Activated CD8-positive, alpha-beta T cell treated with anti-CD3 and anti-CD28 coated beads, Interleukin-2, amount 10 ng/mL, durations not matched to agents 7 days and 5 days (primary cell): ENCODE measurements at regions of chr11 and their contacts with region 1.

Region 1: GRCh38 chr11:67572747-67573419 is 10.7 kb upstream of the GSTP1 start:
- DNase-seq: peak; percentile 51
- ATAC-seq: no peak
- H3K4me3 Mint-ChIP-seq: no peak overlapping the region
- H3K27ac Mint-ChIP-seq: no peak overlapping the region
- H3K4me1 Mint-ChIP-seq: no peaks in the 10 kb centered on the region
- H3K27me3 Mint-ChIP-seq: peaks cover 14% of the 10 kb centered on the region

Region 2: DNA sequence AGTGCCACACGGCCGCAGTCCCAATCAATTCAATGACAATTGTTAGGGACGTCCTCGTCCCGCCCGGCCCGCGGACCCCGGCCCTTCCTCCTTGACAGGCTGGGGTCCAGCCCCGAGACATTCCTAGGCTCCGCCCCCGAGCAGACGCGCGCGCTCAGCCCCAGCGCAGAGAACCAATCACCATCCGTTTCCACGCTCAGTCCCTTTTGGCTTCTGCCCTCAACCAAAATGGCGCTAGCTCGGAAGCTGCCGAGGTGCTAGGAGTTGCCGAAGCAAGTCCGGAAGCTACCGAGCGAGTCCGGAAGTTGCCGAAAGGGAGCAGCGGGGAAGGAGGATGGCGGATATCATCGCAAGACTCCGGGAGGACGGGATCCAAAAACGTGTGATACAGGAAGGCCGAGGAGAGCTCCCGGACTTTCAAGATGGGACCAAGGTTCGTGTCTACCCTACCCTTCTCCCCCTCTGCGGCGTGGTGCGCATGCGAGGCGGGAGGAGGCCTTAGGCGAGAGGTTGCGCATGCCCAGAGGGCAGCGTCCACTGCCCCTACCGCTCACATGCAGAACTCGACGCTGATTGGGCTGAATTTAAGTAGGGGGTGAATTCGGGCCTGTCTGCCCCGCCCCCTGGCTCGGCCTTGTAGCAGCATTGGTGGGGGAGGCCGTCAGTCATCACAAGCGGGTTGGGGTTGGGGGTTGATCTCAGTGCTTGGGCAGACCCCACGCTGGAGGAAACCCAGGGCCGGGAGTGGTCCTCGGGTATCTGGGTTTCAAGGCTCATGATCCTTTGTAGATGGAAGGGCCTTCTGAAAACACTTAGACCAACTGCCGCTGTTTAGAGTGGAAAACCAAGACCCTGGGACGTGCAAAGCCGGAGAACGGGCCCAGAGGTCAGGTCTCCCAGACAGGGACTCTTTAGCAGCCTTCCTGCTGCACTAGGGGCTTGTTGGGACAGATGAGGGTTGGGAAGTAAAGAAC is 89.8 kb before region 1 on chr11 and contains the start of gene AIP:
- CTCF ChIA-PET with region 1: no interaction called
- POLR2A ChIA-PET with region 1: no interaction called
- DNase-seq: peak; percentile 99
- ATAC-seq: peak; percentile 87
- H3K4me3 Mint-ChIP-seq: peak within 1 kb of the TSS; percentile 93
- H3K27ac Mint-ChIP-seq: peak within 1 kb of the TSS; percentile 99
- H3K4me1 Mint-ChIP-seq: peaks cover 53% of the 10 kb centered on the region
- H3K27me3 Mint-ChIP-seq: peaks cover 5% of the 10 kb centered on the region
- total RNA-seq, gene AIP: 156 to 163 TPM

Region 3: DNA sequence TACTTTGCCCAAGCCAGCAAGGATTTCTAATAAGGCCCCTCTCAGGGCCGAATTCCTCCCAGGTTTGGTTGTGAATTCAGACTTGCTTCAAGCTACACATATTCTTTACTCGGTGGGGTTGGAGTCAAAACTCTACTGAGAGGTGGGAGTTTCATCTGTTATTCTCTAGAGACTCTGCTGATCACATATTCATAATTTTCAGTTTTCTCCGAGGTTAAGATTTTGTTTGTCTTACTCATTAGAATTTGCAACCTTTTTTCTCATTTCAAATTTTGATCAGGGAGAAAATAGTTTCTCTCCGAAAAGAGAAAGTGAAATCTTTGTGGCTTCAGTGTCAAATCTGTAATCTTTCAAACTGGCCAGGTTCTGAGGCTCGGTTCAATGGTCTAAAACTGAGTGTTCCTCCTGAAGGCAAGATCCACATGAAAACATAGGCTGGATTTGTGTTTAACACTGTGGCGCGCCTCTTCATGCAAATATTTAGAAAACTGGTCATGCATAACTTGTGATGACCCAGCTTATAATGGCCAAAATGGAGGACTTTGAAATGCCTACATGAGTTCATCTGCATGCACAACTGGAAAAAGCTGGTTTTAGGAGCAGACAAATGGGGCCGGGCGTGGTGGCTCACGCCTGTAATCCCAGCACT is 10.8 kb before region 1 on chr11:
- CTCF ChIA-PET with region 1: interaction called, 11 read pairs
- POLR2A ChIA-PET with region 1: interaction called, 3 read pairs
- DNase-seq: no peak
- ATAC-seq: no peak
- H3K4me3 Mint-ChIP-seq: no peak overlapping the region
- H3K27ac Mint-ChIP-seq: peak overlapping the region; percentile 46
- H3K4me1 Mint-ChIP-seq: peaks cover 14% of the 10 kb centered on the region
- H3K27me3 Mint-ChIP-seq: peaks cover 6% of the 10 kb centered on the region